Naive thymus-derived CD4-positive, alpha-beta T cell (primary cell): ENCODE measurements at regions of chr3 and their contacts with region 1.

Region 1: DNA sequence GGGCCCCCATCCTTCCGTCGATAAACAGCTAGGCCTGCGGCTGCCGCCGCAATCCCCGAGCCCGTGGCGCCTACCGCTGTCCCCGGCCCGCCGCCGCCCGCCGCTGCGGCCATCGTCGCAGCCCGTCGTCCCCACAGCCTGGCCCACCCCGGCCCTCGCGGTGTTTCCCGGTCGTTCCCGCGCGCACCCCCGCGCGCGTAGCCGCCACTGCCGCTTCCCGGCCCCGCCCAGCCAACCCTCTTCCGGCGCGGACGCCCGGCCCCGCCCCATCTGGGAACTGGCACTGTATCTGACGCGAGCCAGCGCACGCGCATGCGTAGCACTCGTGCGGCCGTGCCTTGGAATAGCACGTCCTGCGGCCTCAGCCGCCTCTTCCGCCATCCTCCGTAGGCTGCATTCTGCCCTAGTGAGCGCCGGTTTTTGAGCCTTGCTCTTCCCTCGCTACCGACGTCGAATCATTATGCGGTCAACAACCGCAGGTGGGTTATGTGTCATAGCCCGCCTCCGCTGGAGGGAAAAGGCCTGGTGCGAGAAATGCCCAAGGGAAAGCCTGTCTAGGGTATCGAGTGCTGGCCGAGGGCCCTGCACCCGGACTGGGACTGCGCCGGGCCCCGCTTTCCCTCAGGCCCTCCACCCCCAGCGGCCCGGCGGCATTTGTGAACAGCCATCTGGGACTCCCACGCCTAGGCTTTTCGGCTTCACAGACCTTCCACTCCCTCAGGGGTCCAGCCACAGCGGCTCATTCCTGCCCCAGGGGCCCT is at the start of gene SMARCC1:
- DNase-seq: peak; percentile 95 to 99 (median 97)
- ATAC-seq: peak; percentile 95
- H3K4me3 ChIP-seq: peak within 1 kb of the TSS; percentile 65
- H3K4me3 Mint-ChIP-seq: peak within 1 kb of the TSS; percentile 87 to 98 (median 94)
- H3K27ac ChIP-seq: peak within 1 kb of the TSS; percentile 99
- H3K27ac Mint-ChIP-seq: peak within 1 kb of the TSS; percentile 93 to 100 (median 98)
- H3K4me1 ChIP-seq: peaks cover 18 to 21% of the 10 kb centered on the region in 2 donors
- H3K4me1 Mint-ChIP-seq: peaks cover 18 to 30% (median 23%) of the 10 kb centered on the region in 7 donors
- H3K27me3 ChIP-seq: no peaks in the 10 kb centered on the region
- H3K27me3 Mint-ChIP-seq: peaks cover 0 to 3% (median 0%) of the 10 kb centered on the region in 5 donors
- total RNA-seq, gene SMARCC1: 92.2 to 125 (median 99.1) TPM

Region 2: GRCh38 chr3:46976326-46977190 is 805.3 kb before region 1 on chr3 and contains the start of gene CCDC12:
- CTCF ChIA-PET with region 1: no interaction called
- POLR2A ChIA-PET with region 1: no interaction called
- intact Hi-C with region 1: loop called in 1 of 2 experiments (anchors 10 kb)
- DNase-seq: peak; percentile 79 to 98 (median 96)
- ATAC-seq: peak; percentile 87
- H3K4me3 ChIP-seq: peak within 1 kb of the TSS; percentile 98
- H3K4me3 Mint-ChIP-seq: peak within 1 kb of the TSS; percentile 95 to 100 (median 99)
- H3K27ac ChIP-seq: peak within 1 kb of the TSS; percentile 90
- H3K27ac Mint-ChIP-seq: peak within 1 kb of the TSS; percentile 94 to 99 (median 98)
- H3K4me1 ChIP-seq: peaks cover 46 to 53% of the 10 kb centered on the region in 2 donors
- H3K4me1 Mint-ChIP-seq: peaks cover 44 to 82% (median 63%) of the 10 kb centered on the region in 7 donors
- H3K27me3 ChIP-seq: no peaks in the 10 kb centered on the region
- H3K27me3 Mint-ChIP-seq: no peaks in the 10 kb centered on the region
- total RNA-seq, gene CCDC12: 51.6 to 61.5 (median 56.9) TPM

Region 3: DNA sequence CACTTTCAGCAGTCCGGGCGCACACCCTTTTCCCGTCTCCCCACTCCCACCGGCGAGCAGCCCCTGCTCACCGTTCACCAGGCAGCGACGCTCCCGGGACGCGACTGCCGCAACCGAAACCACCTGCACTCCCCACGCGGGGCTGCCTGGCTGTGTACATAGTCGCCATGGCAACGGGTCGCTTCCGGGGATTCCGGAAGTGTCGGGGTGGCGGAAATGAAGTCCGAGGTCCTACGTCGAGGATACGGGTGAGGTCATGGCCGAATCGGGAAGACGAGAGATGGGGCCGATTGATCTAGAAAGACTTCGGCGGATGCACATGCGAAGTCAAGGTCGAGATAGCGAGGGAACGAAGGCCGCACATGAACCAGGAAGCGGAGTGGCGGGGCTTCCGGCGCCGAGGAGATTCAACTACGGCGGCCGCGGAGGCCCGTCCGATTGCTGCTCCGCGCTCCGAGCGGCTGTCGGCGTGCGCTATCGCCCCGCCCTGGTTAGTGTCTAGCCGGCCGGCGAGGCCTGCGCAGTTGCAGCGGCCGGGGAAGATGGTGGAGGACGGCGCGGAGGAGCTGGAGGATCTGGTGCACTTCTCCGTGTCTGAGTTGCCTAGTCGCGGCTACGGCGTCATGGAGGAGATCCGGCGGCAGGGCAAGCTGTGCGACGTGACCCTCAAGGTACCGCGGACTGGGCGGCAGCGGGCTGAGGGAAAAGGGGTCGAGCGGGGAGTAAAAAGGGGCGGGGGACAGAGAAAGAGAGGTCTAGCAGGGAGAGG is 499.3 kb before region 1 on chr3 and contains the starts of genes KIF9 and KLHL18:
- CTCF ChIA-PET with region 1: no interaction called
- POLR2A ChIA-PET with region 1: no interaction called
- intact Hi-C with region 1: loop called in 1 of 2 experiments (anchors 10 kb)
- DNase-seq: peak; percentile 86 to 98 (median 97)
- ATAC-seq: peak; percentile 91
- H3K4me3 ChIP-seq: peak within 1 kb of the TSS; percentile 76
- H3K4me3 Mint-ChIP-seq: peak within 1 kb of the TSS; percentile 89 to 100 (median 98)
- H3K27ac ChIP-seq: peak within 1 kb of the TSS; percentile 93
- H3K27ac Mint-ChIP-seq: peak within 1 kb of the TSS; percentile 98 to 100 (median 99)
- H3K4me1 ChIP-seq: peaks cover 14 to 23% of the 10 kb centered on the region in 2 donors
- H3K4me1 Mint-ChIP-seq: peaks cover 29 to 56% (median 43%) of the 10 kb centered on the region in 7 donors
- H3K27me3 ChIP-seq: no peaks in the 10 kb centered on the region
- H3K27me3 Mint-ChIP-seq: no peaks in the 10 kb centered on the region
- total RNA-seq, gene KIF9: 2.7 to 15.0 (median 4.1) TPM
- total RNA-seq, gene KLHL18: 21.7 to 47.5 (median 24.5) TPM

Region 4: DNA sequence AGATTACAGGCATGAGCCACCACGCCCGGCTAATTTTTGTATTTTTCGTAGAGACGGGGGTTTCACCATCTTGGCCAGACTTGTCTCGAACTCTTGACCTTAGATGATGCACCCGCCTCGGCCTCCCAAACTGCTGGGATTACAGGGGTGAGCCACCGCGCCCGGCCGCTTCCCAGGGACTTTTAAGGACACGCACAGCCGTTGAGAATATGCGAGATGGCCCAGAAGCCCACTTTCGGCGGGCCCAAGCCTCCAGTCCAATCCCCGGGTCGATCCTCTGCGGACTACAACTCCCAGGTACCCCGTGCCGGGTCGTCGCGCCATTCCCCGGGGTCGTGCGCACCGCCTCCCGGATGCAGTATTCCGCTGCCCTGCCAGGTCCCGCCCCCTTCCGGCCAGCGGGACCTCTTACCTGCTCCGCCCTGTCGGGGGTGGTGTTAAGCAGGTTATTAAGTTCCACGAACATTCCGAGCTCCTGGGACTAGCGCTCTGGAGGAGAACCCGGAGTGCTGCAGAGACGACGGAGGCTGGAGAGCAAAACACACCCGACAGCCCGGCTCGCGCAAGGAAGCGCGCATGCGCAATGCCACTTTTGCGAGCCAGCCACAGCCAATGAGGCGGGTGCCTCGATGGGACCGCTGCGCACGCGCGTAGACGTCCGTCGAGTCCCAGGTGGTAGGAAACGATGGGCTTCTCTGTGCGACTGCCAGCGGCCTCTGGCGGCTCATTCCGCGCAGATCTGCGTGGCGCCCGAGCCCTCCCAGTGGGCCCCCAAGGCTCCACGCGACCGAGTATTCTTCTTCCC is 268.5 kb before region 1 on chr3 and contains the start of gene ELP6:
- CTCF ChIA-PET with region 1: no interaction called
- POLR2A ChIA-PET with region 1: interaction called, 3 read pairs
- intact Hi-C with region 1: loop called (anchors 1 kb)
- DNase-seq: peak; percentile 95 to 100 (median 99)
- ATAC-seq: peak; percentile 98
- H3K4me3 ChIP-seq: peak within 1 kb of the TSS; percentile 99
- H3K4me3 Mint-ChIP-seq: peak within 1 kb of the TSS; percentile 92 to 99 (median 97)
- H3K27ac ChIP-seq: peak within 1 kb of the TSS; percentile 95
- H3K27ac Mint-ChIP-seq: peak within 1 kb of the TSS; percentile 96 to 99 (median 98)
- H3K4me1 ChIP-seq: peaks cover 0 to 11% of the 10 kb centered on the region in 2 donors
- H3K4me1 Mint-ChIP-seq: peaks cover 6 to 31% (median 25%) of the 10 kb centered on the region in 7 donors
- H3K27me3 ChIP-seq: no peaks in the 10 kb centered on the region
- H3K27me3 Mint-ChIP-seq: peaks cover 0 to 8% (median 0%) of the 10 kb centered on the region in 5 donors
- total RNA-seq, gene ELP6: 18.8 to 43.1 (median 25.3) TPM

Region 5: GRCh38 chr3:47634996-47635395 is 146.9 kb before region 1 on chr3:
- CTCF ChIA-PET with region 1: no interaction called
- POLR2A ChIA-PET with region 1: no interaction called
- intact Hi-C with region 1: no loop called
- DNase-seq: no peak
- ATAC-seq: no peak
- H3K4me3 ChIP-seq: no peak overlapping the region
- H3K4me3 Mint-ChIP-seq: peak overlapping the region in 2 of 10 donors; percentile 0 to 12
- H3K27ac ChIP-seq: no peak overlapping the region
- H3K27ac Mint-ChIP-seq: peak overlapping the region in 3 of 9 donors; percentile 1 to 38 (median 17)
- H3K4me1 ChIP-seq: no peaks in the 10 kb centered on the region
- H3K4me1 Mint-ChIP-seq: peaks cover 0 to 8% (median 3%) of the 10 kb centered on the region in 7 donors
- H3K27me3 ChIP-seq: no peaks in the 10 kb centered on the region
- H3K27me3 Mint-ChIP-seq: no peaks in the 10 kb centered on the region

Region 6: DNA sequence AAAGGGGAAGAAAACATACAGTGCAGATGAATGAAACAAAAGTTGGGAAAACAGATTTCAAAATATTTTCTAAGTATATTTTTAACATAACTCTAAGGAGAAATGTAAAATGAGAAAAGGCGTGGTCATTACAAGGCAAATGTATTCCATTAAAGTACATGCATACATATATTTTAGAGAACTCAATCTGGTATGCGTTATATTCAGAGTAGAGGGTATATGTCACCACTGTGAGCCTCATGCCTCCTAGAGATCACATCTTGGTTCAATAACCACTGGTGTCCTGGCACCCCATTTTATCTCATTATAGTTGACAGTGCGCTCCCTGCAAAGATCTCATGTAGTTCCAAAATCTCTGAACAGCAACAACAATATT is 77.6 kb before region 1 on chr3:
- CTCF ChIA-PET with region 1: no interaction called
- POLR2A ChIA-PET with region 1: no interaction called
- intact Hi-C with region 1: loop called in 1 of 2 experiments (anchors 5 kb)
- DNase-seq: no peak
- ATAC-seq: no peak
- H3K4me3 ChIP-seq: no peak overlapping the region
- H3K4me3 Mint-ChIP-seq: no peak overlapping the region
- H3K27ac ChIP-seq: no peak overlapping the region
- H3K27ac Mint-ChIP-seq: peak overlapping the region in 1 of 9 donors; percentile 38
- H3K4me1 ChIP-seq: no peaks in the 10 kb centered on the region
- H3K4me1 Mint-ChIP-seq: peaks cover 0 to 5% (median 0%) of the 10 kb centered on the region in 7 donors
- H3K27me3 ChIP-seq: no peaks in the 10 kb centered on the region
- H3K27me3 Mint-ChIP-seq: no peaks in the 10 kb centered on the region

Region 7: DNA sequence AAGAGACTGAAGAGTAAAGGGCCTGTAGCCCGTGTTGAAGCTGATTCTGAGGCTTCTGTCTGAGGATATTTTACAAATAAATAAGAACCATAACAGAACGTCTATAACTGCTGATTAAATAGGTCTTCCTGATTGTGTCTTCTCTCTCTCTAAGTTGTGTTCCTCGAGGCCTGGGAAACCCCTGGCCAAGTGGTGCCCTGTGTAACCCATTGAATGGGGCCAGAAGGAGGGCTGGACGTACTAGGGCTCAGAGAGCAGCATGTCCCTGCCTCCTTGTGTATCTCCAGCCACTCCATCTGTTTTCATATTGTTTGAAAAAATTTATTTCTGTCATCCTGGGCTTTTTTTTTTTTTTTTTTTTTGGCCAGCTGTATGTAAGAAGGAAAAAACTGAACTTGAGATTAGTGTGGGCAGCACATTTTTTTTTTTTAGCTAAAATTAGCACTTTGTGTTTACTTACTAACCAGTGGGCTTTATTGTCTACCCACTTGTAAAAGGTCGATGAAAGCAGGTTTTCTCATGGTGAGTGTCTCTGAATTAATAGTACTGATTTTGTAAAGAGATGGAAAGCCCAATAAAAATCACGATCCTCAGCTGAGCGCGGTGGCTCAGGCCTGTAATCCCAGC is 31.8 kb after region 1 on chr3:
- CTCF ChIA-PET with region 1: no interaction called
- POLR2A ChIA-PET with region 1: no interaction called
- intact Hi-C with region 1: no loop called
- DNase-seq: no peak
- ATAC-seq: no peak
- H3K4me3 ChIP-seq: no peak overlapping the region
- H3K4me3 Mint-ChIP-seq: no peak overlapping the region
- H3K27ac ChIP-seq: no peak overlapping the region
- H3K27ac Mint-ChIP-seq: peak overlapping the region in 2 of 9 donors; percentile 44 to 45
- H3K4me1 ChIP-seq: no peaks in the 10 kb centered on the region
- H3K4me1 Mint-ChIP-seq: peaks cover 2 to 16% (median 6%) of the 10 kb centered on the region in 7 donors
- H3K27me3 ChIP-seq: no peaks in the 10 kb centered on the region
- H3K27me3 Mint-ChIP-seq: no peaks in the 10 kb centered on the region

Region 8: DNA sequence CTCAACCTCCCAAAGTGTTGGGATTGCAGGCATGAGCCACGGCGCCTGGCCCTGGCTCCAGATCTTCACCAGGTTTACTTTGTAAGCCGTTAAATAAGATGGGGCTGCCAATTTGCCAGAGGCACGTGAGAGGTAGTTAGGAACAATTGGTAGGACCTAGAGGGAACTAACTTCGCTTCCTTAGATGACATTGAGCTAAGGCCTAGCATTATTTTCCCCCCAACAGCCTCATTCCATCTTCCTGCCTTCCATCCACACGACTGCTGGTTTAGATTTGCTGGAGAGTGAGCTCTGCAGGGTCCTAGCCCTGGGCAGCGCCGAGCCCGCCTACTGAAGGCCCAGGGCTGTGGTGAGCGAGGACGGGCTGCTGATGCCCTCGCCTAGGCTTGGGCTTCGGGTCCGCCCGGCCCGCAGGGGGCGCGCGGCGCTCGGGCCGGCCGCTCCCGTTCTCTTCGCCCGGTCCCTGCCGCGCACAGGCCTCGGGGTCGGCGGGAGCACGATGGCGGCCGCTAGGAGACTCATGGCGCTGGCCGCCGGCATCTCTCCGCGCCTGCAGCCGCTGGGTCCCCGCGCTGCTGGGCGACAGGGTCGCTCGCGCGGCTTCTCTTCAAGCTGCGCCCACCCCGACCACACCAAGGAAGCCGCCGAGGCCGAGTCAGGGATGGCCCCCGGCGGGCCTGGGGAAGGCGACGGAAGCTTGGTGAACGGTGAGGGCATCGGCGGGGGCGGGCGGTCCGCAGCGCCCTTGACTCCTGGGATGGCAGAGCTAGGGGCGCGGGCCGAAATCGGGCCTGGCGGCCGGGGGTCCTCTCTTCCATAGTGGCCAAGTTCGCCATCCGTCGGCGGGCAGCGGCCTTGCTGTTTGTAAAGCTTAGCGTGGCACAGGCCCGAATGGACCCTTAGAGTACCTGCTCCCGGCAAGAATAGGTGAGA is 42.9 kb after region 1 on chr3:
- CTCF ChIA-PET with region 1: no interaction called
- POLR2A ChIA-PET with region 1: interaction called, 5 read pairs
- intact Hi-C with region 1: loop called in 1 of 2 experiments (anchors 2 kb)
- DNase-seq: peak; percentile 62 to 86 (median 79)
- ATAC-seq: peak; percentile 100
- H3K4me3 ChIP-seq: peak overlapping the region; percentile 79
- H3K4me3 Mint-ChIP-seq: peak overlapping the region; percentile 81 to 94 (median 90)
- H3K27ac ChIP-seq: peak overlapping the region; percentile 88
- H3K27ac Mint-ChIP-seq: peak overlapping the region; percentile 66 to 96 (median 89)
- H3K4me1 ChIP-seq: peaks cover 15% of the 10 kb centered on the region in 2 donors
- H3K4me1 Mint-ChIP-seq: peaks cover 15 to 46% (median 36%) of the 10 kb centered on the region in 7 donors
- H3K27me3 ChIP-seq: no peaks in the 10 kb centered on the region
- H3K27me3 Mint-ChIP-seq: no peaks in the 10 kb centered on the region

Region 9: GRCh38 chr3:47836986-47837385 is 55.1 kb after region 1 on chr3:
- CTCF ChIA-PET with region 1: no interaction called
- POLR2A ChIA-PET with region 1: no interaction called
- intact Hi-C with region 1: no loop called
- DNase-seq: no peak
- ATAC-seq: no peak
- H3K4me3 ChIP-seq: no peak overlapping the region
- H3K4me3 Mint-ChIP-seq: no peak overlapping the region
- H3K27ac ChIP-seq: no peak overlapping the region
- H3K27ac Mint-ChIP-seq: peak overlapping the region in 6 of 9 donors; percentile 35 to 56 (median 50)
- H3K4me1 ChIP-seq: no peaks in the 10 kb centered on the region
- H3K4me1 Mint-ChIP-seq: peaks cover 0 to 12% (median 7%) of the 10 kb centered on the region in 7 donors
- H3K27me3 ChIP-seq: no peaks in the 10 kb centered on the region
- H3K27me3 Mint-ChIP-seq: no peaks in the 10 kb centered on the region

Region 10: GRCh38 chr3:49411968-49412631 is 1630.2 kb after region 1 on chr3 and contains the starts of genes RHOA and TCTA:
- CTCF ChIA-PET with region 1: no interaction called
- POLR2A ChIA-PET with region 1: no interaction called
- intact Hi-C with region 1: loop called in 1 of 2 experiments (anchors 5 kb)
- DNase-seq: peak; percentile 94 to 100 (median 99)
- ATAC-seq: peak; percentile 90
- H3K4me3 ChIP-seq: peak within 1 kb of the TSS; percentile 86
- H3K4me3 Mint-ChIP-seq: peak within 1 kb of the TSS; percentile 82 to 97 (median 94)
- H3K27ac ChIP-seq: peak within 1 kb of the TSS; percentile 96
- H3K27ac Mint-ChIP-seq: peak within 1 kb of the TSS; percentile 88 to 97 (median 95)
- H3K4me1 ChIP-seq: peaks cover 61 to 65% of the 10 kb centered on the region in 2 donors
- H3K4me1 Mint-ChIP-seq: peaks cover 51 to 82% (median 71%) of the 10 kb centered on the region in 7 donors
- H3K27me3 ChIP-seq: no peaks in the 10 kb centered on the region
- H3K27me3 Mint-ChIP-seq: peaks cover 0 to 2% (median 0%) of the 10 kb centered on the region in 5 donors
- total RNA-seq, gene RHOA: 212 to 411 (median 218) TPM
- total RNA-seq, gene TCTA: 24.9 to 34.5 (median 28.5) TPM